Mucosa of descending colon (tissue), 3 donors: ENCODE measurements at regions of chr1 and their contacts with region 1.

Region 1: DNA sequence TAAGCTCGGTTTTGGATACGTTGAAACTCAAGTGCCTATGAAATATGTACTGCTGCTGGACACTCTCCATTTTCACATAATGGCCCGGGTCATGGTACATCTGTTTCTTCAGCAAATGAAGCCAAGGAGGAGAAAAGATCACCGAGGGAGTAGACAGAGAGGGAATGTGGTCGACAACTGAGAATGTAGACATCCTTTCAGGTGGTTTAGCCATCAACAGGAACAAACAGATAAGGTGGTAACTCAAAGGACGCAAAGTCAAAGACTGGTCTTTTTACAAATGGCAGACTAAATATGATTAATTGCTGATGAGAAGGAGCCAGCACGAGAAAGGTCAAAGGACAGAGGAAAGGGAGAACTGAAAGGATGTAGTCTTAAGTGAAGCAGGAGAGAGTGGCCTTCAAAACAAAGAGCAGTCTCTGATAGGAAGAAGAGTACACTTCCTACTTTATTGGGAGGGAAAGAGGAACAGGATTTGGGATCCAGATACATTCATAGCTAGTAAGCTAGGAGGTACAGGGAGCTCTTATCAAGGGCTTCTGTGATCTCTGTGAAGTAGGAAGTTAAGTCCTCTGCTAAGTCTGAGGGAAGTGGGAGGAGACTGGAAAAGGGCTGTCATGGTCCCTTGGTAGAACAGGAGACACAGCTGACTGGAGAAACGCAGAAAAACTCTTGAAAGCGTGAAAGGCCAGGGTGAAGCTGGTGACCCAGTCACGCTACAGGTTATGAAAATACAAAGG is 28.3 kb downstream of the NUP133 start:
- DNase-seq: no peak
- ATAC-seq: peak; percentile 51
- H3K4me3 ChIP-seq: no peak overlapping the region
- H3K4me1 ChIP-seq: no peaks in the 10 kb centered on the region
- CTCF ChIP-seq: no peak

Region 2: DNA sequence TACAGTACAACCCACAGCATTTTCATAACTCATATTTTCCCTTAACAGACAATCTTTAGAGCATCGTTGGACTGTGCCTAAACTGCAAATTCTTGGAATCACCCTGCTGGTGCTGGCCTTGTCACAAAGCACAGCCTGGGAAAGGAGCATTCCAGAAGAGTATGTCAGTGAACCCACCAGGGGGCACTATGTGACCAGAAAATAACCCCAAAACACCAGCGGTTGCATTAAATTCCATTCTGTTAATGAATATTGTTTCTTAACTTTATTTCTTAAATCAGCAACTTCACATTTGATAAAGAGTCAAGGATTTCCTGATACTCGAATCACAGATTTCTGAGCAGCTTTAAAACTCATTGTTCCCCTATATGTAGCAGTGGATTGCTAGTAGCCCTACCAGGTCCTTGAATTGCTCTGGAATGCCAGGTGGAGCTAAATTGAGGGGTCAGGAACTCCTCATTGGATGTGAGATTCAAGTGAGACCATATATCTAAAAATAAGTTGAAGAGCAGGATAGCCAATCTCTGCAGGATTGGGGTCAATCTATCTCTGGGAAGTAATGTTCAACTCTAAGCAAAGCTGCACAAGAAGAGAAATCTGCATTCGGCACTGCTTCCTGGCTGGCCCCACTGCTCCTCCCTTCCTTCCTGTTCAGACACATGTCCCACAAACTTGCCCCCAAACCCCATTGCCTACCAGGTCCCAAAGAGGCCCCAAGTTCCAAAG is 221.6 kb before region 1 on chr1:
- intact Hi-C with region 1: loop called (anchors 2 to 10 kb)
- DNase-seq: peak in 1 of 3 donors; percentile 86
- ATAC-seq: peak; percentile 80
- H3K4me3 ChIP-seq: no peak overlapping the region
- H3K4me1 ChIP-seq: no peaks in the 10 kb centered on the region
- CTCF ChIP-seq: peak; percentile 45

Region 3: GRCh38 chr1:229268505-229268904 is 211.3 kb before region 1 on chr1:
- intact Hi-C with region 1: loop called in 1 of 2 experiments (anchors 10 kb)
- DNase-seq: no peak
- ATAC-seq: no peak
- H3K4me3 ChIP-seq: no peak overlapping the region
- H3K4me1 ChIP-seq: peaks cover 16% of the 10 kb centered on the region
- CTCF ChIP-seq: no peak

Region 4: GRCh38 chr1:229972600-229973296 is 492.9 kb after region 1 on chr1:
- intact Hi-C with region 1: no loop called
- DNase-seq: peak in 2 of 3 donors; percentile 24 to 43
- ATAC-seq: peak; percentile 64
- H3K4me3 ChIP-seq: no peak overlapping the region
- H3K4me1 ChIP-seq: no peaks in the 10 kb centered on the region
- CTCF ChIP-seq: no peak

Region 5: DNA sequence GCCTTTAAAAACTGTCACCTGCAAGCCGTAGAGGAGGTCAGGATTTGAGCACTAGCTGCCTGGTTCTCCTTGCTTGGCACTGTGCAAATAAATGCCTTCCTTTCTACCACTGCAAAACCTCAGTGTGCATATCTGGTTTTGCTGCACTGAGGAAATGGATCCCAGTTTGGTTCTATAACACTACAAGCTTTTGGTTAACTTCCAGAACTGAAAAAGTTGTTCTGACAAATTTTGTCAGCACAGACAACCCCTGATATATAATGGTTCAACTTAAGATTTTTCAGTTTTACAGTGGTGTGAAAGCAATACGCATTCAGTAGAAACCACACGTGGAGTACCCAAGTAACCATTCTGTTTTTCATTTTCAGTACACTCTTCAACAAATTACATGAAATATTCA is 557.4 kb after region 1 on chr1:
- intact Hi-C with region 1: no loop called
- DNase-seq: no peak
- ATAC-seq: no peak
- H3K4me3 ChIP-seq: no peak overlapping the region
- H3K4me1 ChIP-seq: no peaks in the 10 kb centered on the region
- CTCF ChIP-seq: no peak